PC-3 (cell line): ENCODE measurements at regions of chr10 and their contacts with region 1.

Region 1: GRCh38 chr10:34575882-34576281 is 239.2 kb downstream of the PARD3 start:
- DNase-seq: peak; percentile 84
- ATAC-seq: peak; percentile 27
- H3K4me3 ChIP-seq: no peak overlapping the region
- H3K27ac ChIP-seq: no peak overlapping the region
- H3K4me1 ChIP-seq: peaks cover 35% of the 10 kb centered on the region
- H3K27me3 ChIP-seq: no peaks in the 10 kb centered on the region
- CTCF ChIP-seq: no peak

Region 2: GRCh38 chr10:34549001-34549400 is 26.9 kb before region 1 on chr10:
- CTCF ChIA-PET with region 1: no interaction called
- POLR2A ChIA-PET with region 1: no interaction called
- intact Hi-C with region 1: loop called (anchors 2 kb)
- DNase-seq: no peak
- ATAC-seq: no peak
- H3K4me3 ChIP-seq: no peak overlapping the region
- H3K27ac ChIP-seq: no peak overlapping the region
- H3K4me1 ChIP-seq: no peaks in the 10 kb centered on the region
- H3K27me3 ChIP-seq: no peaks in the 10 kb centered on the region
- CTCF ChIP-seq: no peak